BJ (cell line): ENCODE measurements at regions of chr6 and their contacts with region 1.

Region 1: DNA sequence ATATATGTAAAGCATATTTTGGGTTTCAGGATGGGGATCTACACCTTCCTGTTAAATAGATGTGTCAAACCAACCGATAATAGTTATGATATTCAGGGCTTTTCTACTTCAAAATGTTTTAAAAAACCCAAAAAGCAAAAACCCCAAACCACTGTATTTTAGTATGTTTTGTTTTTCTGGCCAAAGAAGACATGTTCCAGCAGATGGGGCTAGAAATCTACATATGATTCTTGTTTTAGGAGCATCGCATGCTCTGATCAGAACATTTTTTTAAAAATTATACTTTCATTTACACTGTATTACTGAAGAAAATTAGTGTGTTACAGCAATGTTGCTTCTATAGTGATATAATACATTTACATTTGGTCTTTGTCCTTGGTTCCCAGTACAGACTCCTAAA is 11.0 kb downstream of the RMND1 start:
- DNase-seq: no peak
- H3K4me3 ChIP-seq: no peak overlapping the region
- H3K27me3 ChIP-seq: no peaks in the 10 kb centered on the region
- CTCF ChIP-seq: peak; percentile 47

Region 2: GRCh38 chr6:151430886-151431285 is 10.0 kb before region 1 on chr6:
- CTCF ChIA-PET with region 1: no interaction called
- POLR2A ChIA-PET with region 1: no interaction called
- DNase-seq: no peak
- H3K4me3 ChIP-seq: no peak overlapping the region
- H3K27me3 ChIP-seq: no peaks in the 10 kb centered on the region
- CTCF ChIP-seq: no peak

Region 3: DNA sequence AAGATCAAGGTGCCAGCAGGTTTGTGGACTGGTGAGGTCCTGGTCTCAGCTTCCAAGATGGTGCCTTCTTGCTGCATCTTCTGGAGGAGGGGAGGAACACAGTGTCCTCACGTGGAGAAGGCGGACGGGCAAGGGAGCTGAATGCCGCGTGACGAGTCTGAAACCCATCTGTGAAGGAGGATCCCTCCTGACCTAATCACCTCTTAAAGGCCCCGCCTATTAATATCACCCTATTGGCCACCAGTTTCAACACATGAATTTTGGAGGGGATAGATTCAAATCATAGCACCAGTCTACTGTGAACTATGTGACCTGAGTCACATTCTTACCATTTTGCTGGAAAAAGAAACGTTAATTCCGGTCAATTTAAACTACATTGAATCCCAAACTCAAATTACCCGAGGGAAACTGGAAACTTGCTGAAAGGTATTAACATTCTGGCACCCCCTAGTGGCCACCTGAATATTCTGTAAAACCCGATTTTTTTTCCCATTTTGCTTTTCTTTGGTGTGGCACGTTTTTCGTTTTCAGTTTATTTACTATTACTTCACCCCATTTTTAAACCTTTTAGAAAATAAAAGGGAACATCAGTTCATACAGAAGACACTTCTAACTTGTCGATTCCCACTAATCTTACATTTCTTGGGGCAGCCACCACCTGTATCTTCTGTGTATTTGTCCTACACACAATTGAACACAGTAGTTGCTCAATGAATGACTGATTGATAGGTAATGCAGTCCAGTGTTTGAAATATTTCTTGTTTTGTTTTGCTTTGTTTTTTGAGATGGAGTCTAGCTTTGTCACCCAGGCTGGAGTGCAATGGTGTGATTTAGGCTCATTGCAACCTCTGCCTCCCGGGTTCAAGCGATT is 35.0 kb after region 1 on chr6:
- CTCF ChIA-PET with region 1: interaction called, 11 read pairs
- POLR2A ChIA-PET with region 1: no interaction called
- DNase-seq: no peak
- H3K4me3 ChIP-seq: no peak overlapping the region
- H3K27me3 ChIP-seq: no peaks in the 10 kb centered on the region
- CTCF ChIP-seq: peak; percentile 77